GM18951 (cell line): ENCODE measurements at regions of chr2 and their contacts with region 1.

Region 1: GRCh38 chr2:42102024-42102590 is 54.3 kb downstream of the PKDCC start:
- POLR2A ChIP-seq: no peak

Region 2: GRCh38 chr2:42169874-42170521 is 67.9 kb after region 1 on chr2:
- in situ Hi-C with region 1: loop called (anchors 10 kb)
- POLR2A ChIP-seq: no peak